ENCODE measurements at regions of chr1 and their contacts with region 1.

Region 1: GRCh38 chr1:167599957-167600581 is 30.0 kb upstream of the RCSD1 start:
- DNase-seq: peak; percentile 31
- ATAC-seq: peak; percentile 82 to 86

Region 2: DNA sequence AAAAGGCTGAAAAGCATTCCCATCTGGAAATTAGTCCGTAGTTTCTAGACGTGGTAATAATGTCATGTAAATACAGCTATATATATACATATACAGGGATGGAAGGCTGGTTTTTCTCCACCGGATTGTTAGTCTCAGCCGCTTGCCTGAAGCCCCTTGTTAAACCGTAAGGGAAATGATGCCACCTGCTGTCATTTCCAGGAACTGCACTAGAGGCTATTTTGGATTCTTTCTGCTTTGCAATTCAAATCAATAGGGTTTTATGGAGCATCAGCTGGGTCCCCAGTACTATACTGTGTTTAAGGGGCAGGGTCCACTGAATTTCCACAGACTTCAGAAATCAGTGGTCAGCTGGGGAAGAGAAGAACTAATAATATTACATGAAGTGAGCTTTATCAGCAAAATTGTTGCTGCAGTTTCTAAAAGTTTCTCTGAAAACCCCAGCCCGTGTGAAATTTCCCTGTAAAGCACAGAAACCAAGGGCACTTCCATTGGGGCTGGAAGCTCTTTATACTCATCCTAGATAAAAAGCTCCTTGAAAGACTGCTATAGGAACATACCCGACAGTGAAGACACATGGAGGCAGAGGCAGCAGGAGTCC is 88.0 kb after region 1 on chr1:
- intact Hi-C with region 1: loop called (anchors 1 to 2 kb)
- DNase-seq: peak; percentile 67
- ATAC-seq: peak; percentile 27 to 36

Region 3: DNA sequence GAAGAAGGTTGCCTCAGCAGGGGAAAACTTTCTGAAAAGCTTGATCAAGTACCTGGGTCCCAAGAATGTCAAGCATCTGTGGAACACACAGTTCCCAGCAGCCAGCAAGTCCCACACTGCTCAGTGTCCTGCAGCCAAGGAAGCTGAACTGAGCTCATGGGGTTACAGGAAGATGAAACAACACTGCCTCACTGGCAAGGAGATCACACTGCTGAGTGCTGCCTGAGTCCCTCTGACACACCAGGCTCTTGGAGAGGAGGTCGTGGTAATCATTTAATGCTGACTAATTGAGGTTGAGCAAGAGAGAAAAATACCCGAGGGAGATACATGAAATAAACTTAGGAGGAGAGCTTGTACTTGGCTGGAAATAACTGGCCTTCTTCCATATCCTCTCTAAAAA is 196.9 kb after region 1 on chr1:
- intact Hi-C with region 1: loop called (anchors 10 kb)
- DNase-seq: peak; percentile 86
- ATAC-seq: peak; percentile 96 to 98

Region 4: GRCh38 chr1:167803358-167804207 is 203.5 kb after region 1 on chr1:
- intact Hi-C with region 1: loop called (anchors 10 kb)
- DNase-seq: peak; percentile 95
- ATAC-seq: peak; percentile 96

Region 5: GRCh38 chr1:167881069-167881468 is 281.0 kb after region 1 on chr1:
- intact Hi-C with region 1: no loop called
- DNase-seq: no peak
- ATAC-seq: peak in 1 of 2 donors; percentile 31